Activated CD4-positive, alpha-beta memory T cell treated with anti-CD3 and anti-CD28 coated beads for 36 hours (primary cell): ENCODE measurements at regions of chr1 and their contacts with region 1.

Region 1: DNA sequence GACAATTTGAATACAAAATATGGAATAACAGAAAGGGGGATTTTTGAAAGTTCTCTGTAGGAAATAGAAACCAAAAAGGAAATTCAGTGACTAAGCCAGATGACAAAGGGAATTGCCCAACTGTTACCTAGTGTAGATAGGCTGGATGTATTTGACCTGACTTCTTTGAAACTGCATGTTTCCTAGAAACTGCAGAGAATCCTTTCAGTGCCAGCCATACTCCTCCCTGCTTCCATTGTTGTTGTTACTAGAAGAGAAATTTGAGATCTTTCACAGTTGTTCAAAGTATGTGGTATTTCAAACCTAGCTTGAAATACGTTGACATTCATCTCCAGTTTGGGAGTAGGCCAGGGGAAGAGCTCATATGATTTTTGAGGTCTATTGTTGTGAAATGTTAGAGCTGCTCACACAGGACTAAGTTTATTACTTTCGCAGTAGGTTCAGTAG is 1.8 kb upstream of the GBP5 start:
- DNase-seq: no peak
- H3K4me3 Mint-ChIP-seq: peak overlapping the region; percentile 80
- H3K27ac Mint-ChIP-seq: peak overlapping the region; percentile 99
- H3K4me1 Mint-ChIP-seq: peaks cover 76% of the 10 kb centered on the region
- H3K27me3 Mint-ChIP-seq: no peaks in the 10 kb centered on the region

Region 2: GRCh38 chr1:88983791-88984559 is 290.5 kb before region 1 on chr1:
- CTCF ChIA-PET with region 1: interaction called, 12 read pairs
- POLR2A ChIA-PET with region 1: interaction called, 3 read pairs
- intact Hi-C with region 1: no loop called
- DNase-seq: peak; percentile 41
- H3K4me3 Mint-ChIP-seq: peak overlapping the region; percentile 17
- H3K27ac Mint-ChIP-seq: peak overlapping the region; percentile 80
- H3K4me1 Mint-ChIP-seq: peaks cover 87% of the 10 kb centered on the region
- H3K27me3 Mint-ChIP-seq: no peaks in the 10 kb centered on the region

Region 3: GRCh38 chr1:88998716-88999115 is 275.7 kb before region 1 on chr1:
- CTCF ChIA-PET with region 1: interaction called, 28 read pairs
- POLR2A ChIA-PET with region 1: no interaction called
- intact Hi-C with region 1: loop called (anchors 1 kb)
- DNase-seq: no peak
- H3K4me3 Mint-ChIP-seq: no peak overlapping the region
- H3K27ac Mint-ChIP-seq: no peak overlapping the region
- H3K4me1 Mint-ChIP-seq: peaks cover 27% of the 10 kb centered on the region
- H3K27me3 Mint-ChIP-seq: no peaks in the 10 kb centered on the region

Region 4: GRCh38 chr1:89085781-89086180 is 188.7 kb before region 1 on chr1:
- CTCF ChIA-PET with region 1: interaction called, 9 read pairs
- POLR2A ChIA-PET with region 1: no interaction called
- intact Hi-C with region 1: loop called (anchors 1 kb)
- DNase-seq: peak; percentile 43
- H3K4me3 Mint-ChIP-seq: no peak overlapping the region
- H3K27ac Mint-ChIP-seq: no peak overlapping the region
- H3K4me1 Mint-ChIP-seq: peaks cover 6% of the 10 kb centered on the region
- H3K27me3 Mint-ChIP-seq: no peaks in the 10 kb centered on the region

Region 5: GRCh38 chr1:89198491-89199072 is 75.9 kb before region 1 on chr1 and contains the start of gene GBP4:
- CTCF ChIA-PET with region 1: interaction called, 6 read pairs
- POLR2A ChIA-PET with region 1: interaction called, 27 read pairs
- intact Hi-C with region 1: loop called (anchors 1 kb)
- DNase-seq: peak; percentile 60
- H3K4me3 Mint-ChIP-seq: peak within 1 kb of the TSS; percentile 88
- H3K27ac Mint-ChIP-seq: peak within 1 kb of the TSS; percentile 90
- H3K4me1 Mint-ChIP-seq: peaks cover 80% of the 10 kb centered on the region
- H3K27me3 Mint-ChIP-seq: no peaks in the 10 kb centered on the region
- total RNA-seq, gene GBP4: 26.5 to 29.9 TPM

Region 6: DNA sequence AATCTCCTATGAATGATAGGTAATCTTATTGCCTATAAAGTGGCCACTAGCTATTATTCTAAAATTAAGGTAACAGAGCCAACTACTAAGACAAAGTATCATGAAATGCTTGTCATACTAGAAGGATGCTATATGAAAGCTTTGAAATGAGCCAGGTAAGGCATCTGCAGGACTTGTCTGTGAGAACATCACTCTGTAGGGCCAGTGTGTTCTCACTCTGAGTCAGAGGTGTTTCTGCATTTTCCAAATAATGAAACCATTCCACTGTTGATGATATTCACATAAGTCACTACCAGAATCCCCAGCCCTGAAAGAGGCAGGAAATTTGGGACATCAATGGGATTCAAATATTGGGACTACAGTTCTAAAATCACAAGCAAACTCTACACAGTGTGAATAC is 24.0 kb after region 1 on chr1:
- CTCF ChIA-PET with region 1: interaction called, 7 read pairs
- POLR2A ChIA-PET with region 1: interaction called, 13 read pairs
- intact Hi-C with region 1: loop called (anchors 1 kb)
- DNase-seq: no peak
- H3K4me3 Mint-ChIP-seq: no peak overlapping the region
- H3K27ac Mint-ChIP-seq: no peak overlapping the region
- H3K4me1 Mint-ChIP-seq: peaks cover 63% of the 10 kb centered on the region
- H3K27me3 Mint-ChIP-seq: no peaks in the 10 kb centered on the region

Region 7: DNA sequence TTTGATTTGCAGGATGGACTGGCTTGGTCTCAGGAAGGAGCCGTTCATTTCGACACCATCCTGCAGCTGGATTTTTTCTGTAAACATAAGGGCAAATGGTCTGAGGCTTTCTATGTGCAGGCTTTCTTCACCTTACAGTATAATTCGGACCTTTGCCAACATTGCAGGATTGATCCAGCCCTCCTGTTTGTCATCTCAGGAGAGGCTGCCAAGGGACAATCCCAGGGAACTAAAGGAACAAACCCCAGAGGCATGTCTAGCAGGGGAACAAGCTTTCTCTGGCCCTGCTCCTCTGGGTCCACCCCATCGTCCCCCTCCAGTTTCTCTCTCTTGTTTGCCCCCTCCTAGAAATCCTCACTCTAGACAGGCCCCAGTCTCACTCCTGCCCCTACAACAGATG is 64.6 kb after region 1 on chr1:
- CTCF ChIA-PET with region 1: no interaction called
- POLR2A ChIA-PET with region 1: no interaction called
- intact Hi-C with region 1: no loop called
- DNase-seq: no peak
- H3K4me3 Mint-ChIP-seq: no peak overlapping the region
- H3K27ac Mint-ChIP-seq: no peak overlapping the region
- H3K4me1 Mint-ChIP-seq: no peaks in the 10 kb centered on the region
- H3K27me3 Mint-ChIP-seq: no peaks in the 10 kb centered on the region

Region 8: GRCh38 chr1:89358287-89358893 is 84.0 kb after region 1 on chr1:
- CTCF ChIA-PET with region 1: interaction called, 31 read pairs
- POLR2A ChIA-PET with region 1: interaction called, 4 read pairs
- intact Hi-C with region 1: loop called (anchors 1 kb)
- DNase-seq: peak; percentile 86
- H3K4me3 Mint-ChIP-seq: peak overlapping the region; percentile 68
- H3K27ac Mint-ChIP-seq: peak overlapping the region; percentile 72
- H3K4me1 Mint-ChIP-seq: peaks cover 41% of the 10 kb centered on the region
- H3K27me3 Mint-ChIP-seq: no peaks in the 10 kb centered on the region